ENCODE measurements at regions of chr17 and their contacts with region 1.

Region 1: DNA sequence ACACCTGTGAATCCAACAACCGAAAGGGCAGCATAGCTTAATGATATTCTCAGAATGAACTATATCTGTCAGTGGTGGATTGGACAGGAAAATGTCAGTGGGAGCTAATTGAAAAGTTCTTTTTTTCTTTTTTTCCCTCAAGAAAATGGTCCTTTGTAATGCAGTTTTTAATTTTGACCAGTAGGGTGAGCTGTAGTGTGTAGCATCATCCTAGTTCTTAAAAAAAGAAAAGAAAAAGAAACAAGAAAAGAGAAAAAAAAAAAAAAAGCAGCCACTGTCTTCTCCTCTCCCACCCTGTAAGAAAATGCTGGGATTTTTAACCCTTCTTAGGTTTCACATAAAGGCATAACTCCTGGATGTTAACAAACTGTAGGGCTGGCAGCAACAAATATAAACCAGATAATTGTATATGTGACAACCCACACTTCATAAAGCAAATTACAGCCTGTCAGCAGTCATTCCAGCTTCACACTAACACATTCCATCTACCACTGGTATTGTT is 78.1 kb downstream of the SKAP1 start:
- DNase-seq: peak in 4 of 5 donors; percentile 31 to 50 (median 43)
- H3K4me3 ChIP-seq: no peak overlapping the region
- H3K4me3 Mint-ChIP-seq: no peak overlapping the region
- H3K27ac ChIP-seq: no peak overlapping the region
- H3K27ac Mint-ChIP-seq: peak overlapping the region in 2 of 7 donors; percentile 35 to 39
- H3K4me1 ChIP-seq: peaks cover 8% of the 10 kb centered on the region
- H3K4me1 Mint-ChIP-seq: peaks cover 5 to 19% (median 8%) of the 10 kb centered on the region in 4 donors
- H3K27me3 ChIP-seq: no peaks in the 10 kb centered on the region
- H3K27me3 Mint-ChIP-seq: no peaks in the 10 kb centered on the region

Region 2: DNA sequence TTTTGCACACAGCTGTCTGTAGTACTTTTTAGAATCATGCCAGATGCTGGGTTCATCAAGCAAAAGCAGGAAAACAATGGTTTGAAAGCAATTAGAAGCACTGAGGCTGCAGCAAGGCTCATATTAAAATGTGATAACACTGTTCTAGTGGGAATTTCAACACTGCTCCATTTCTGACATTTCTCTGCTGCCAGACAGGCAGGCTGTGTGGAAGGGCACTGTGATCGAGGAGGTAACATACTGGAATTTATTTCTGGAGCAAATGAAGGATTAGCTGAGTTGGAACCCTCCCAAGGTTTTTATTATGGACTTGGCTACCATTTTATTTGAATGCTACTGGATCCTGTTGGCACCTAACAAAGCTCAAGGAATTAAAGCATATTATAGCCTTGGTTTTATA is 11.3 kb after region 1 on chr17:
- CTCF ChIA-PET with region 1: interaction called, 21 read pairs
- POLR2A ChIA-PET with region 1: no interaction called
- intact Hi-C with region 1: no loop called
- DNase-seq: no peak
- H3K4me3 ChIP-seq: no peak overlapping the region
- H3K4me3 Mint-ChIP-seq: no peak overlapping the region
- H3K27ac ChIP-seq: no peak overlapping the region
- H3K27ac Mint-ChIP-seq: peak overlapping the region in 5 of 7 donors; percentile 16 to 46 (median 18)
- H3K4me1 ChIP-seq: peaks cover 30% of the 10 kb centered on the region
- H3K4me1 Mint-ChIP-seq: peaks cover 27 to 48% (median 39%) of the 10 kb centered on the region in 4 donors
- H3K27me3 ChIP-seq: no peaks in the 10 kb centered on the region
- H3K27me3 Mint-ChIP-seq: no peaks in the 10 kb centered on the region

Region 3: DNA sequence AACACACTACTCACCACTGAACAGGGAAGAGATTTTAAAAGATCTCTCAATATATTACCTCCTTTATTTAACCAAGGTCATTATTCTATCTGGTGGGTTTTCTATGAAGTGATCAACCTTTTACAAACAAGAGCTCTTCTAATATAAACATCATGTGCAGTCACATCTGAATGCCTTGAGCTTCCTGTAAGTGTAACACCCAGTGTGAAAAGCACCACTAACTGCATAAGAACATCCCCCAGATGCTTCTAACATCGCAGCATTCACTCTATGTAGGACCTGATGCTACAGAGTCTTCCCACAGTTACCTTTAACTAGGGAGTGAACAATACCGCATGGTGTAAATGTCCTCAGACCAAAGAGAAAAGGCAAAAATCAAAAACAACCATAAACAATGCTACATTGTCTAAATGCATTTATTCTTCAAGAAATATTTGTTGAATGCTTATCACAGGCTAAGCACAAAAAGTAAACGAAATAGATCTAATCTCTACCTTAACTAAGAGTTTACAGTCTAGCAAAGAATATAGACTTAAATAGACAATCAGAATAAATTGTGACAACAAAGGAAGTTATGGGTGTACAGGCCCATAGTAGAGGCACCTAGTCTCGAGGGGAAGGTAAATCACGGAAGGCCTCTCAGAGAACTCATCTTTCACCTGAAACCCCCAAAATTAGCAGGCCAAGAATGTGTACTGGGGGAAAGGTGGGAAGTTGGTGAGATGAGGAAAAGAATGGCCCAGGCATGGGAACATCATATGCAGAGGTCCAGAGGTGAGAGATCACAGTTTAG is 61.9 kb after region 1 on chr17:
- CTCF ChIA-PET with region 1: interaction called, 17 read pairs
- POLR2A ChIA-PET with region 1: no interaction called
- intact Hi-C with region 1: no loop called
- DNase-seq: peak in 2 of 5 donors; percentile 19 to 29
- H3K4me3 ChIP-seq: no peak overlapping the region
- H3K4me3 Mint-ChIP-seq: peak overlapping the region; percentile 63 to 85 (median 74)
- H3K27ac ChIP-seq: peak overlapping the region; percentile 48
- H3K27ac Mint-ChIP-seq: peak overlapping the region; percentile 80 to 96 (median 91)
- H3K4me1 ChIP-seq: peaks cover 95% of the 10 kb centered on the region
- H3K4me1 Mint-ChIP-seq: peaks cover 63 to 88% (median 78%) of the 10 kb centered on the region in 4 donors
- H3K27me3 ChIP-seq: no peaks in the 10 kb centered on the region
- H3K27me3 Mint-ChIP-seq: no peaks in the 10 kb centered on the region

Region 4: DNA sequence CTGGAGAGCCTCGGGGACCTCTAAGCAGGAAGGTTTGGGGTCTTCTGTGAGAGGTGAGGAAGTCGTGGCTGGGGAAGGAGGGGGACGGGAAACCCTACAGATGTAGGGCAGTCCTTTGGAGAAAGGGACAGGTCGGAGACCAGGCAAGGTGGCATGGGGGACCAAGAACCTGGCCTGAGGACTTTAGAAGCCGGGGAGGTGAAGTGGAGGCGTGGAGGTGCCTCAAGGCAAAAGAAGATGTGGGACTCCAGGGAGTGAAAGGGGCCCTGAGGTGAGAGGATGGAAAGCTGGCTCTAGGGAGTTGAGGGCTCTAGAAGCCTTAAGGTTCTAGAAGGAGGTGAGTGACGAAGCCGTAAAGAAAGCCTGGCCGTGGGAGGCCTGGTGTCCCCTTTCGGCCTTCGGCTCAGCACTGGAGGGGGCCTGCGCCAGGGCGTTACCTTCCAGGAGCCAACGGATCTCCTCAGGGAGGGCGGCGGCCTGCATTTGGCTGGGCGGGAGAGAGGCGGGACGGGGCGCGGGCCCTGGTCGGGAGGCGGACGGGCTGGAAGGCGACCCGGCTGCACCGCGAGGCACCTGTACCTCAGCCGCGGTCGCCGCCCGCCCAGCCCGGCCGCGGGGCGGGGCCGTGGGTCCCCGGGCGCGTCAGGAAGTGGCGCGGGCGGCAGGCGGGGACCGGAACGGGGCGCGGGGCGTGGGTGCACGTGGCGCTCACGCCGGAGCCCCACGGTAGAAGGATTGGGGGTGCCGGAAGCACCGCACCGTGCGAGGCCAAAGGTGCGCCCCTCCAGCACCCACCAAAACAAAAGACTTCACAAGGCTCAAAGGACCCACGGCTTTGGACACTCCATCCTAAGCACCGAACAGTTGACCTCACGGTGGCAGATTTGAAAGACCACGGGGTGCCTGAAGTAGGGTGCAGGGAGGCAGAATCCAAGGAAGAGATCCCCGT is 78.0 kb after region 1 on chr17 and contains the start of gene SKAP1:
- CTCF ChIA-PET with region 1: interaction called, 13 read pairs
- POLR2A ChIA-PET with region 1: interaction called, 4 read pairs
- intact Hi-C with region 1: no loop called
- DNase-seq: peak; percentile 68 to 76 (median 71)
- H3K4me3 ChIP-seq: peak within 1 kb of the TSS; percentile 90 to 97
- H3K4me3 Mint-ChIP-seq: peak within 1 kb of the TSS; percentile 91 to 99 (median 97)
- H3K27ac ChIP-seq: peak within 1 kb of the TSS; percentile 89
- H3K27ac Mint-ChIP-seq: peak within 1 kb of the TSS; percentile 95 to 99 (median 97)
- H3K4me1 ChIP-seq: peaks cover 69% of the 10 kb centered on the region
- H3K4me1 Mint-ChIP-seq: peaks cover 62 to 97% (median 77%) of the 10 kb centered on the region in 4 donors
- H3K27me3 ChIP-seq: no peaks in the 10 kb centered on the region
- H3K27me3 Mint-ChIP-seq: no peaks in the 10 kb centered on the region
- total RNA-seq, gene SKAP1: 83.4 to 88.7 TPM

Region 5: DNA sequence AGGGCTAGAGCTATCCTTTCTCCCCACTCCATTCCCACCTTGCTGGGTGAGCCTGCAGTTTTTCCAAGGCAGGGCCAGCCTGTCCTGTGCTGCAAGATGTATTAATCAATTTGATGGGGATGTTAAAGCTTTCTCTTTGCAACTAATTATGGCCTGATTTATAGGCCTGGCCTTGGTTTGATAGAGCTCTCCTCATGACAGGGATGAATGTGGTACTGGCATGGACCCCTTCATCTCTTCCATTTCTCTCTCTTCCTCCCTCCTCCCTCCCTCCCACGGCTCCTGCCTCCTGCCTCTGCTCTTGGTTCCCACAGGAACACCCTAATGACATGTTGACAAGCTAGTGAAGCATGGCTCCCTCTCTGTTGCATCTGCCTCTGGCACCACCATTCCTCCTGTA is 125.3 kb after region 1 on chr17:
- CTCF ChIA-PET with region 1: interaction called, 10 read pairs
- POLR2A ChIA-PET with region 1: no interaction called
- intact Hi-C with region 1: no loop called
- DNase-seq: no peak
- H3K4me3 ChIP-seq: no peak overlapping the region
- H3K4me3 Mint-ChIP-seq: no peak overlapping the region
- H3K27ac ChIP-seq: no peak overlapping the region
- H3K27ac Mint-ChIP-seq: no peak overlapping the region
- H3K4me1 ChIP-seq: no peaks in the 10 kb centered on the region
- H3K4me1 Mint-ChIP-seq: peaks cover 0 to 8% (median 5%) of the 10 kb centered on the region in 4 donors
- H3K27me3 ChIP-seq: no peaks in the 10 kb centered on the region
- H3K27me3 Mint-ChIP-seq: peaks cover 0 to 1% of the 10 kb centered on the region in 2 donors

Region 6: DNA sequence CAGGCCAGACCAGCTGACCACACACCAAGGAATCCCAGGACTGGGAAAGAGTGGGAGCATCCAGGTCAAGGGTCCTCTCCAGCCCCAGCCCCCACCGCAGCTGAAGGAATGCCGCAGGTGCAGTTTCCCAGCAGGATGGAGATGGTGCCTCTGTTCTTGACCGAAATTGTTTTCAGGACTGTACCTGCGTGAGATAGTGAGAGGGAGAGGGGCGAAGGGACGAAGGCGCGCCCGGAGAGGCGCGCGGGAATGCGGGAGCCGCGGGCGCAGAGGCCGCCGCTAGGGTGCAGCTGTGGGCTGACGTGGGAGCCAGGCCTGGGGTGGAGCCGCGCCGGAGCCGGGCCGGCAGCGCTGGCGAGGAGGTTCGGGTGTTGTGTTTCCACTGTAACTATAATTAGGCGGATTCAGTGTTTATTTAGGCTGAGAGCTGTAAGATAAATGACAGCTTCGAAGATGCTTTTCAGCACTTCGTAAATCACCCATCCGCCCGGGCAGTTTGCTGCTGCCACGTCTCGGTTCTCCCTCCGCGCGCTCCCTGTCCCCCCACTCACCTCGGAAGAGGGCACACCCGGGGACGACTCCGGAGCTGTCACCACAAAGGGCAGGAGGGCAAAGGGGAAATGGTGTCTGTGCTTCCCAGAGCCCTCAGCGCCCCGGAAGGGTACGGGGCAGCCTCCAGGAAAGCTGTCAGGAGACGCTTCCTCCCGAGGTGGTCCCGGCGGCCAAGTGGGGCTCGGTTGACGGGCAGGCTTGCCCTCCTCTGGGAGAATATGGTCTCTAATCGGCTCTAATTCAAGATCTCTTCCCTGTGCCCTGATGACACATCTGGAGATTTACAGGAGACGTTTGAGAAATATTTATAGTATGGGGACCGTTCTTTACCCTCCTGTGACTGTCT is 140.8 kb after region 1 on chr17:
- CTCF ChIA-PET with region 1: interaction called, 21 read pairs
- POLR2A ChIA-PET with region 1: no interaction called
- intact Hi-C with region 1: no loop called
- DNase-seq: peak; percentile 54 to 63 (median 58)
- H3K4me3 ChIP-seq: peak overlapping the region in 1 of 2 donors; percentile 38
- H3K4me3 Mint-ChIP-seq: peak overlapping the region; percentile 35 to 76 (median 56)
- H3K27ac ChIP-seq: no peak overlapping the region
- H3K27ac Mint-ChIP-seq: no peak overlapping the region
- H3K4me1 ChIP-seq: peaks cover 22% of the 10 kb centered on the region
- H3K4me1 Mint-ChIP-seq: peaks cover 6 to 21% (median 11%) of the 10 kb centered on the region in 4 donors
- H3K27me3 ChIP-seq: no peaks in the 10 kb centered on the region
- H3K27me3 Mint-ChIP-seq: peaks cover 1 to 6% of the 10 kb centered on the region in 2 donors

Region 7: GRCh38 chr17:48586355-48587258 is 234.7 kb after region 1 on chr17:
- CTCF ChIA-PET with region 1: interaction called, 59 read pairs
- POLR2A ChIA-PET with region 1: no interaction called
- intact Hi-C with region 1: no loop called
- DNase-seq: no peak
- H3K4me3 ChIP-seq: peak overlapping the region; percentile 73 to 98
- H3K4me3 Mint-ChIP-seq: peak overlapping the region; percentile 90 to 97 (median 94)
- H3K27ac ChIP-seq: no peak overlapping the region
- H3K27ac Mint-ChIP-seq: peak overlapping the region in 3 of 7 donors; percentile 11 to 82 (median 69)
- H3K4me1 ChIP-seq: peaks cover 29% of the 10 kb centered on the region
- H3K4me1 Mint-ChIP-seq: peaks cover 12 to 46% (median 29%) of the 10 kb centered on the region in 4 donors
- H3K27me3 ChIP-seq: peaks cover 34% of the 10 kb centered on the region
- H3K27me3 Mint-ChIP-seq: peaks cover 49 to 70% of the 10 kb centered on the region in 2 donors

Measured in CD4-positive, alpha-beta memory T cell (primary cell).